CD8-positive, alpha-beta T cell (primary cell): ENCODE measurements at regions of chr17 and their contacts with region 1.

Region 1: GRCh38 chr17:48944519-48945260 is at the start of gene SNF8:
- DNase-seq: peak; percentile 83 to 96 (median 92)
- ATAC-seq: peak; percentile 93
- H3K4me3 ChIP-seq: peak within 1 kb of the TSS; percentile 94 to 98
- H3K4me3 Mint-ChIP-seq: peak within 1 kb of the TSS; percentile 97
- H3K27ac ChIP-seq: peak within 1 kb of the TSS; percentile 90 to 93
- H3K27ac Mint-ChIP-seq: peak within 1 kb of the TSS; percentile 97
- H3K4me1 ChIP-seq: peaks cover 25% of the 10 kb centered on the region
- H3K4me1 Mint-ChIP-seq: peaks cover 19% of the 10 kb centered on the region
- H3K27me3 ChIP-seq: no peaks in the 10 kb centered on the region
- H3K27me3 Mint-ChIP-seq: no peaks in the 10 kb centered on the region
- CTCF ChIP-seq: no peak
- total RNA-seq, gene SNF8: 61.7 to 64.3 TPM

Region 2: GRCh38 chr17:48908047-48908843 is 36.4 kb before region 1 on chr17 and contains the start of gene UBE2Z:
- CTCF ChIA-PET with region 1: no interaction called
- POLR2A ChIA-PET with region 1: interaction called, 10 read pairs
- intact Hi-C with region 1: loop called (anchors 1 kb)
- DNase-seq: peak; percentile 79 to 96 (median 88)
- ATAC-seq: peak; percentile 87
- H3K4me3 ChIP-seq: peak within 1 kb of the TSS; percentile 74 to 77
- H3K4me3 Mint-ChIP-seq: peak within 1 kb of the TSS; percentile 95
- H3K27ac ChIP-seq: peak within 1 kb of the TSS; percentile 88 to 95
- H3K27ac Mint-ChIP-seq: peak within 1 kb of the TSS; percentile 99
- H3K4me1 ChIP-seq: peaks cover 39% of the 10 kb centered on the region
- H3K4me1 Mint-ChIP-seq: peaks cover 49% of the 10 kb centered on the region
- H3K27me3 ChIP-seq: no peaks in the 10 kb centered on the region
- H3K27me3 Mint-ChIP-seq: no peaks in the 10 kb centered on the region
- CTCF ChIP-seq: no peak
- total RNA-seq, gene UBE2Z: 56.4 to 56.7 TPM

Region 3: GRCh38 chr17:49016788-49017463 is 72.2 kb after region 1 on chr17:
- CTCF ChIA-PET with region 1: no interaction called
- POLR2A ChIA-PET with region 1: no interaction called
- intact Hi-C with region 1: no loop called
- DNase-seq: no peak
- ATAC-seq: no peak
- H3K4me3 ChIP-seq: no peak overlapping the region
- H3K4me3 Mint-ChIP-seq: no peak overlapping the region
- H3K27ac ChIP-seq: no peak overlapping the region
- H3K27ac Mint-ChIP-seq: no peak overlapping the region
- H3K4me1 ChIP-seq: no peaks in the 10 kb centered on the region
- H3K4me1 Mint-ChIP-seq: peaks cover 3% of the 10 kb centered on the region
- H3K27me3 ChIP-seq: peaks cover 6 to 7% of the 10 kb centered on the region in 2 experiments
- H3K27me3 Mint-ChIP-seq: peaks cover 45% of the 10 kb centered on the region
- CTCF ChIP-seq: no peak